Activated CD4-positive, alpha-beta T cell treated with anti-CD3 and anti-CD28 coated beads, Interleukin-2, amount 10 ng/mL, durations not matched to agents 24 days and 14 days (primary cell): ENCODE measurements at regions of chr17 and their contacts with region 1.

Region 1: GRCh38 chr17:40340880-40341807 is 23.4 kb downstream of the GJD3 start:
- DNase-seq: peak; percentile 95
- H3K4me3 Mint-ChIP-seq: peak overlapping the region; percentile 79
- H3K27ac Mint-ChIP-seq: peak overlapping the region; percentile 89
- H3K4me1 Mint-ChIP-seq: peaks cover 62% of the 10 kb centered on the region
- H3K27me3 Mint-ChIP-seq: no peaks in the 10 kb centered on the region

Region 2: DNA sequence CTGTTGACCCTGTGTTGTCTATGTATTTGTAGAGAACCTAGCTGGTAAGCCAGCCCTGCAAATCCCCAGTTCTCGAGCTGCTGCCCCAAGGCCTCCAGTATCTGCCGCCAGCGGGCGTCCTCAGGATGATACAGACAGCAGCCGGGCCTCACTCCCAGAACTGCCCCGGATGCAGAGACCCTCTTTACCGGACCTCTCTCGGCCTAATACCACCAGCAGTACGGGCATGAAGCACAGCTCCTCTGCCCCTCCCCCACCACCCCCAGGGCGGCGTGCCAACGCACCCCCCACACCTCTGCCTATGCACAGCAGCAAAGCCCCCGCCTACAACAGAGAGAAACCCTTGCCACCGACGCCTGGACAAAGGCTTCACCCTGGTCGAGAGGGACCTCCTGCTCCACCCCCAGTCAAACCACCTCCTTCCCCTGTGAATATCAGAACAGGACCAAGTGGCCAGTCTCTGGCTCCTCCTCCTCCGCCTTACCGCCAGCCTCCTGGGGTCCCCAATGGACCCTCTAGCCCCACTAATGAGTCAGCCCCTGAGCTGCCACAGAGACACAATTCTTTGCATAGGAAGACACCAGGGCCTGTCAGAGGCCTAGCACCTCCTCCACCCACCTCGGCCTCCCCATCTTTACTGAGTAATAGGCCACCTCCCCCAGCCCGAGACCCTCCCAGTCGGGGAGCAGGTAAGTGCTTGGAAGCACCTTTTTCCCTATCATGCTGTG is 76.5 kb before region 1 on chr17:
- intact Hi-C with region 1: no loop called
- DNase-seq: no peak
- H3K4me3 Mint-ChIP-seq: no peak overlapping the region
- H3K27ac Mint-ChIP-seq: no peak overlapping the region
- H3K4me1 Mint-ChIP-seq: peaks cover 8% of the 10 kb centered on the region
- H3K27me3 Mint-ChIP-seq: no peaks in the 10 kb centered on the region

Region 3: GRCh38 chr17:40329839-40330794 is 11.0 kb before region 1 on chr17:
- intact Hi-C with region 1: loop called (anchors 1 kb)
- DNase-seq: peak; percentile 70
- H3K4me3 Mint-ChIP-seq: peak overlapping the region; percentile 78
- H3K27ac Mint-ChIP-seq: peak overlapping the region; percentile 47
- H3K4me1 Mint-ChIP-seq: peaks cover 80% of the 10 kb centered on the region
- H3K27me3 Mint-ChIP-seq: no peaks in the 10 kb centered on the region